ENCODE measurements at regions of chr21 and their contacts with region 1.

Region 1: DNA sequence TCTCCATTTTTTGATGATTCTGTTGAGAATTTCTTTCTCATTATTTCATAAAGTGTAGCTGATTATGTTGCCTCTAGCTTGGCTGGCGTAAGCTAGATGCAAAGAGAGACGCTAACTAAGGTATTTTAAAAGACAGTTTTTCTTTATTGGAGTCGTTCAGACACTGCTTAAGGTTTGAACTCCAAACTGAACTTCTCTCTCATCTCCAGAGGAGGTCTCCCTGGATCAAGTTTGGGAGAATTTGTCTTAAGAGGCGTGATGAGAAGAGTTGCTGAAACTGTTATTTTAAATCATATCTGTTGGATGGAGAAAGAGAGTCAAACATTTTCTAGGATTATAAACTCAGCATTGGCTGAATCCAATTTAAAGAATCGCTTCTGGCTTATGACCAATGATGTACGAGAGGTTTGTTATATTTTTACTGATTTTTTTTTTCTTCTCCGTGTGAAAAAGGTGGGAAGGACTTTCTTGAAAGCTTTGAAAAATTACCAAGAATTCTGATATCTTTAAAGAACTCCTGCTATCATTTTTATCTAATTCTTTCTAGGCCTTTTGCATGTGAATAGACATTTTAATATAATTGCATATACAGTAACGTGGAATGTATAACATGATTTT is 34.0 kb downstream of the MAP3K7CL start:
- DNase-seq: peak; percentile 86
- ATAC-seq: peak; percentile 65
- H3K4me3 ChIP-seq: no peak overlapping the region
- H3K27ac ChIP-seq: no peak overlapping the region
- H3K4me1 ChIP-seq: peaks cover 15% of the 10 kb centered on the region
- H3K27me3 ChIP-seq: no peaks in the 10 kb centered on the region
- CTCF ChIP-seq: peak; percentile 95

Region 2: GRCh38 chr21:29217818-29218291 is 53.4 kb after region 1 on chr21:
- CTCF ChIA-PET with region 1: no interaction called
- POLR2A ChIA-PET with region 1: no interaction called
- intact Hi-C with region 1: loop called (anchors 2 kb)
- DNase-seq: peak; percentile 98
- ATAC-seq: peak; percentile 92
- H3K4me3 ChIP-seq: peak overlapping the region; percentile 44; the same call in 1 of the 2 replicates
- H3K27ac ChIP-seq: peak overlapping the region; percentile 91
- H3K4me1 ChIP-seq: peaks cover 34% of the 10 kb centered on the region
- H3K27me3 ChIP-seq: no peaks in the 10 kb centered on the region
- CTCF ChIP-seq: no peak

Region 3: GRCh38 chr21:29258626-29259335 is 94.3 kb after region 1 on chr21:
- CTCF ChIA-PET with region 1: interaction called, 5 read pairs
- POLR2A ChIA-PET with region 1: no interaction called
- intact Hi-C with region 1: loop called (anchors 2 kb)
- DNase-seq: peak; percentile 89
- ATAC-seq: peak; percentile 81
- H3K4me3 ChIP-seq: peak overlapping the region; percentile 34; the same call in 1 of the 2 replicates
- H3K27ac ChIP-seq: peak overlapping the region; percentile 55
- H3K4me1 ChIP-seq: peaks cover 53% of the 10 kb centered on the region
- H3K27me3 ChIP-seq: no peaks in the 10 kb centered on the region
- CTCF ChIP-seq: no peak

Region 4: DNA sequence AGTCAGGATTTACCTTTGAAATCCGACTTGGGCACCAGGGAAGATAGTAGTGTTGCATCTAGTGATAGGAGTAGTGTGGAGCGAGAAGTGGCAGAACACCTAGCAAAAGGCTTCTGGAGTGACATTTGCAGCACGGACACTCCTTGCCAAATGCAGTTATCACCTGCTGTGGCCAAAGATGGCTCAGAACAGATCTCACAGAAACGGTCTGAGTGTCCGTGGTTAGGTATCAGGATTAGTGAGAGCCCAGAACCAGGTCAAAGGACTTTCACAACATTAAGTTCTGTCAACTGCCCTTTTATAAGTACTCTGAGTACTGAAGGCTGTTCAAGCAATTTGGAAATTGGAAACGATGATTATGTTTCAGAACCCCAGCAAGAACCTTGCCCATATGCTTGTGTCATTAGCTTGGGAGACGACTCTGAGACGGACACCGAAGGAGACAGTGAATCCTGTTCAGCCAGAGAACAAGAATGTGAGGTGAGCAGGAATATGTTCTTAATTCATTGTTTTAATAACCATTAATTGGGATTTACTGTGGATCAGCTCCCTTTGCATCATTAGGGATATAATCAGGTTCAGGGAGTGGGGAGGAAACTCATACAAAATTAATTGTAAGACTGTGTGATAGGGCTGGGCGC is 162.6 kb after region 1 on chr21:
- CTCF ChIA-PET with region 1: no interaction called
- POLR2A ChIA-PET with region 1: no interaction called
- intact Hi-C with region 1: no loop called
- DNase-seq: no peak
- ATAC-seq: no peak
- H3K4me3 ChIP-seq: no peak overlapping the region
- H3K27ac ChIP-seq: no peak overlapping the region
- H3K4me1 ChIP-seq: peaks cover under 1% of the 10 kb centered on the region; the same call in 1 of the 2 replicates
- H3K27me3 ChIP-seq: no peaks in the 10 kb centered on the region
- CTCF ChIP-seq: no peak

Region 5: DNA sequence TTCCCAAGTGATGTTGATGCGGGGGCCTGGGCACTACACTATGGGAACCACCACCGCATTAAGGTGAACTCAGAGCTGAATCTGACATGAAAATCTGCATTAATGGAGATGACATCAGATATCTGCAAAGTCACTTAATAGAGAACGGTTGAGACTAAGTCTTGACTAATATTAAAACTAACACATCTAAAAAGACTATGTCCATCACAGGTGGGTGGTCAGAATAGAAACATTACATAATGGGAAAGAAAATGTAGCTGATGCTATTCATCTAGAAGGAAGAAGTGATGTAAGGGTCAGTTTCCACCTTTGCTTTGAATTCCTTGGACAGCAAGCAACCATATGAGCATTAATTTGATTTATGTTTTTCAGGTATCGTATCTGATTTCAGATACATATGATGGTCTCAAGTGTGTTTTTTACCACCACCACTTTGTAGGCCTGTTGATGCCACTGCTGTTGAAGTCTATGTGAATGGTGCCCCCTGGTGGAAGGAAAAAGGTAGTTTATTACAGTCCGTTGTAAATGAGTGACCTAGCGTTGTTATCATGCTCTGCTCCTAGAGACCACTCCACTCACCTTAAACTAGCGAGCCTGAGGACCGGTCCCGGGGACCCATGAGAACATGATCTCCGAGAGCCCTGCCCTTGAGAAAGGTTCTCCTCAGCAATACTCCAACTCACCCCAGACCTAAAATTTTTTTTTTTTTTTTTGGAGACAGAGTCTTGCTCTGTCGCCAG is 207.8 kb after region 1 on chr21:
- CTCF ChIA-PET with region 1: no interaction called
- POLR2A ChIA-PET with region 1: no interaction called
- intact Hi-C with region 1: loop called (anchors 1 kb)
- DNase-seq: peak; percentile 87
- ATAC-seq: peak; percentile 99
- H3K4me3 ChIP-seq: no peak overlapping the region
- H3K27ac ChIP-seq: no peak overlapping the region
- H3K4me1 ChIP-seq: no peaks in the 10 kb centered on the region
- H3K27me3 ChIP-seq: no peaks in the 10 kb centered on the region
- CTCF ChIP-seq: peak; percentile 85